ENCODE measurements at regions of chr18 and their contacts with region 1.

Region 1: GRCh38 chr18:3966985-3967856 is 487.9 kb downstream of the DLGAP1 start:
- DNase-seq: peak; percentile 75 to 81
- ATAC-seq: peak; percentile 38
- H3K4me3 ChIP-seq: no peak overlapping the region
- H3K27ac ChIP-seq: peak overlapping the region; percentile 67
- H3K4me1 ChIP-seq: peaks cover 6 to 9% of the 10 kb centered on the region in 2 donors
- H3K27me3 ChIP-seq: no peaks in the 10 kb centered on the region

Region 2: DNA sequence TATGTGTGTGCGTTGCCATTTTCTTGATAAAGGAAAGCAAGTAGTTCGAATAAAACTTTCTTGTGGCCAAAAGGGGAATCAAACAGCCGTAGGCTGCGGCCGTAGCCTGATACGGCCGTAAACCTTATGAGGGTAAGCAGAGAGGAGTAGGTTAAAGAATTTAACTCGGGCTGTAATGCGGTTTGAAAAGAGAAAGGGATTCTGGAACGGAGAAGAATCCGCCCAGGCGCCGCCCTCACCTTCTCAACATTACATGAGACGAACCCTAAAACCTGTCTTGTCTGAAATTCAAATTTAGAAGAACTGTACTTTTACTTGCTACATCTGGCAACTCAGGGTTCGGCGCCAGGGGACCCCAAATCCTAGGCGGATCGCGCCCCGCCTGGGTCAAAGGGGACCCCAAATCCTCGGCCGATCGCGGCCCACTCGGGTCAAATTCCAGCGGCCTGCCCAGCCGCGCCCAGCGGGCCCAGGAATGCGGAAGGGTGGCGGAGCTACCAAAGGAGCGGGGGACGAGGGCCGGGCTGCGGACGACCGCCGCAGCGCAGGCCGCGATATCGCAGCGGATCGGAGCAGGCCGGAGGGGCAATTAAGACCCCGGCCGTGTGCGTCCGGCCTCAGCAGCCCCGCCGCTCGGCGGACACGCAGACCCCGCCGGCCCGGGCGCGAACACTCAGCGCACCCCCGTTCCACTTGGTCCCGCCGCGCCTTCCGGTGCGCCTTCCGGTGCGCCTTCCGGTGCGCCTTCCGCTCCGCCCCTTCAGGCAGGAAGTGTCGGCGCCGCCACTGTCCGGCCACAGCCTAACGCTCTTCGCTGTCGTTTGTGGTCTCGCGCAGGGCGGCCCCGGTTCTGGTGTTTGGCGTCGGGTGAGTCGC is 705.6 kb before region 1 on chr18 and contains the start of gene MYL12B:
- intact Hi-C with region 1: loop called in 1 of 2 experiments (anchors 10 kb)
- DNase-seq: peak; percentile 87 to 92
- ATAC-seq: peak; percentile 95
- H3K4me3 ChIP-seq: peak within 1 kb of the TSS; percentile 65 to 87
- H3K27ac ChIP-seq: peak within 1 kb of the TSS; percentile 66 to 87
- H3K4me1 ChIP-seq: peaks cover 0 to 7% of the 10 kb centered on the region in 2 donors
- H3K27me3 ChIP-seq: no peaks in the 10 kb centered on the region
- total RNA-seq, gene MYL12B: 259 to 324 TPM

Region 3: GRCh38 chr18:3914833-3915610 is 52.2 kb before region 1 on chr18:
- intact Hi-C with region 1: loop called (anchors 2 to 5 kb)
- DNase-seq: no peak
- ATAC-seq: no peak
- H3K4me3 ChIP-seq: no peak overlapping the region
- H3K27ac ChIP-seq: no peak overlapping the region
- H3K4me1 ChIP-seq: peaks cover 3% of the 10 kb centered on the region in 2 donors
- H3K27me3 ChIP-seq: no peaks in the 10 kb centered on the region

Region 4: GRCh38 chr18:3995476-3996102 is 28.4 kb after region 1 on chr18:
- intact Hi-C with region 1: no loop called
- DNase-seq: peak in 1 of 2 donors; percentile 58
- ATAC-seq: no peak
- H3K4me3 ChIP-seq: peak overlapping the region; percentile 12 to 48
- H3K27ac ChIP-seq: no peak overlapping the region
- H3K4me1 ChIP-seq: no peaks in the 10 kb centered on the region
- H3K27me3 ChIP-seq: no peaks in the 10 kb centered on the region

Region 5: DNA sequence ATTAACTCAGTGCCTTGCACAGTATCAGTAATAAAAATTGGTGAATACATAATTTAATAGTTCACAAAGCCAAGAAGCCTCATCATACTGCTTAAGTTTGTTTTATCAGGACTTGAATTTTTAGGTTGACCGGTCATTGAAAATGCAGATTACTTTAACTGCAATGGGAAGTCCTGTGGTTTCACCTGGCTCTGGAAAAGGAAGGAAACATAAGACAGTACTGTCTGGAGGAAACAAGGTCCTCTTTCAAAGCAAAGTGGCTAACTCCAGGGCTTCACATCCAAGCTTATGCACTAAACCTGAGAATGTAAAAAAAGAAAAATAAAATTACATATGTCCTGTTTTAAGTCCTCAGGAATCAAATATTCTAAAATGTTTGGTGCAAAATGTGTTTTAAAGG is 368.2 kb after region 1 on chr18:
- intact Hi-C with region 1: no loop called
- DNase-seq: no peak
- ATAC-seq: no peak
- H3K4me3 ChIP-seq: no peak overlapping the region
- H3K27ac ChIP-seq: no peak overlapping the region
- H3K4me1 ChIP-seq: no peaks in the 10 kb centered on the region
- H3K27me3 ChIP-seq: no peaks in the 10 kb centered on the region